Activated T-helper 1 cell treated with anti-CD3 and anti-CD28 coated beads, Interleukin-12 subunit alpha, Interleukin-12 subunit beta, Interleukin-2, Interleukin-4 antibody, amounts not matched to agents 30 ng/mL and 10 ng/mL and 1 ng/mL, durations not matched to agents 14 hours and 24 hours and 36 hours (primary cell): ENCODE measurements at regions of chr5 and their contacts with region 1.

Region 1: GRCh38 chr5:88140856-88141752 is 127.5 kb downstream of the TMEM161B start:
- DNase-seq: peak; percentile 89
- H3K4me3 Mint-ChIP-seq: no peak overlapping the region
- H3K27ac Mint-ChIP-seq: no peak overlapping the region
- H3K4me1 Mint-ChIP-seq: peaks cover 24% of the 10 kb centered on the region
- H3K27me3 Mint-ChIP-seq: peaks cover 32% of the 10 kb centered on the region

Region 2: GRCh38 chr5:87780831-87781760 is 360.0 kb before region 1 on chr5:
- intact Hi-C with region 1: loop called (anchors 5 kb)
- DNase-seq: peak; percentile 64
- H3K4me3 Mint-ChIP-seq: no peak overlapping the region
- H3K27ac Mint-ChIP-seq: no peak overlapping the region
- H3K4me1 Mint-ChIP-seq: no peaks in the 10 kb centered on the region
- H3K27me3 Mint-ChIP-seq: peaks cover 10% of the 10 kb centered on the region

Region 3: GRCh38 chr5:88268385-88269184 is 127.5 kb after region 1 on chr5 and contains the start of gene TMEM161B:
- intact Hi-C with region 1: loop called (anchors 1 kb)
- DNase-seq: peak; percentile 92
- H3K4me3 Mint-ChIP-seq: peak within 1 kb of the TSS; percentile 97
- H3K27ac Mint-ChIP-seq: peak within 1 kb of the TSS; percentile 98
- H3K4me1 Mint-ChIP-seq: peaks cover 47% of the 10 kb centered on the region
- H3K27me3 Mint-ChIP-seq: no peaks in the 10 kb centered on the region
- total RNA-seq, gene TMEM161B: 26.6 and 28.4 TPM in 2 replicates

Region 4: DNA sequence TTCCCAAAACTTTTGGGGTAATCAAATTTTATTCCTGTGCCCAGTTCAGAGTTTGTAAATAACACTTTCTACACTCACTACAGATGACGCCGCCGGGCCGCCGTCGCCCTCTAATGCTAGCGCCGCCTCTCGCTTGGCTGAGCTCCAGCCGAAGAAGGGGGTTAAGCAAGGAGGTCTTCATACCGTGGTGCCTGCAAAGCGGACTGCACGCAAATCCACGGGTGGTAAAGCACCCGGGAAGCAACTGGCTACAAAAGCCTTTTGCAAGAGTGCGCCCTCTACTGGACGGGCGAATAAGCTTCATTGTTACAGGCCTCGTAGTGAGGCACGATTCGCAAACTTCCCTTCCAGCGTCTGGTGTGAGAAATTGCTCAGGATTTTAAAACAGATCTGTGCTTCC is 461.5 kb after region 1 on chr5:
- intact Hi-C with region 1: loop called (anchors 1 kb)
- DNase-seq: peak; percentile 4
- H3K4me3 Mint-ChIP-seq: no peak overlapping the region
- H3K27ac Mint-ChIP-seq: no peak overlapping the region
- H3K4me1 Mint-ChIP-seq: no peaks in the 10 kb centered on the region
- H3K27me3 Mint-ChIP-seq: no peaks in the 10 kb centered on the region

Region 5: DNA sequence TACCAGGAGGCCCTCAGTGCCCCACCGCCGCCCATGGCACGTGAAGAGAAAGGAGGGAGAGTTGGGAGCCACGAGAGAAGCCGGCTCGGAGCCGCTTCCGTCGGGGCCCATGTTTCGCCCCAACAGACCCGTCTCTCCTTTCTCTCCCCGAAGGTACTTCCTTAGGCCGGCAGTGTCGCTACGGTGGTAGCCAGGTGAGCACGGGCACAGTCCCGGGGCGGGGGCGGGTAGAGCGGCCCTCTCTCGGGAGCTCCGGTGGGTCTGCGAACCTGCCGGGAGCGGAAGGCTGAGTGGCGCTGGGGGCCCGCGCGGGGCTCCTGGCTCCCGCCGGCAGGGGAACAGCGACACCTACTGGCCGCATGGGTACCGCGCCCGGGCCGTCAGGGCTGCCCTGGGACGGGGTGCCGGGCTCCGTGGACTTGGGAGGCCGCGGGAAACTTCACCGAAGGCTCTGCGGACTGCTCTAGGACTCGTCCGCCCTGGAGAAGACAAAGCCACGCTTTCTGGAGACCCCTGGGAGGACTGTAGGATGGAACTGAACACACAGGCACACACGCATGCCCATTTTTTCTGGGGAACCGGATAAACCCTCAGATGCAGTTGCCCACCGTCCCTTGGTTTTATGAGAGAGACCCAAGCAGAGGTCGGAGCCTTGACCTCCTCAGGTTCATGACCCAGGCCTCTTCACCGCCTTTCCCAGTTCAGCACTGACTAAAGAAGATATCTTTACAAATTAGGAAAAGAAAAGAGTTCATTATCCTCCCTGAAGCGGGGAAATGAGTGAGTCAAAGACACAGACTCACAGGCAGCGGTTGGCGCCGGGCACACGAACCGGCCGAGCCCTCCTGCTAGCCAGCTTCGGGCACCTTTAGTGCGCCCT is 539.4 kb after region 1 on chr5:
- intact Hi-C with region 1: loop called (anchors 2 kb)
- DNase-seq: peak; percentile 71
- H3K4me3 Mint-ChIP-seq: peak overlapping the region; percentile 26
- H3K27ac Mint-ChIP-seq: no peak overlapping the region
- H3K4me1 Mint-ChIP-seq: peaks cover 31% of the 10 kb centered on the region
- H3K27me3 Mint-ChIP-seq: peaks cover 81% of the 10 kb centered on the region